ENCODE measurements at regions of chr5 and their contacts with region 1.

Region 1: GRCh38 chr5:57173185-57174127 is at the start of gene GPBP1:
- DNase-seq: peak; percentile 94
- ATAC-seq: peak; percentile 72
- H3K4me3 ChIP-seq: peak within 1 kb of the TSS; percentile 87
- H3K27ac ChIP-seq: peak within 1 kb of the TSS; percentile 99
- H3K4me1 ChIP-seq: no peaks in the 10 kb centered on the region
- H3K27me3 ChIP-seq: no peaks in the 10 kb centered on the region
- CTCF ChIP-seq: no peak
- EP300 ChIP-seq: peak; percentile 68 to 72; a peak in 2 of 4 replicates
- POLR2A ChIP-seq: peak; percentile 77
- RAD21 ChIP-seq: no peak
- polyA plus RNA-seq, gene GPBP1: 27.0 to 32.5 TPM

Region 2: GRCh38 chr5:55307383-55308253 is 1865.8 kb before region 1 on chr5 and contains the starts of genes DHX29 and MTREX:
- CTCF ChIA-PET with region 1: no interaction called
- POLR2A ChIA-PET with region 1: no interaction called
- RAD21 ChIA-PET with region 1: no interaction called
- SMC1A ChIA-PET with region 1: no interaction called
- in situ Hi-C with region 1: loop called (anchors 25 kb)
- intact Hi-C with region 1: no loop called
- DNase-seq: peak; percentile 63
- ATAC-seq: peak; percentile 94
- H3K4me3 ChIP-seq: peak within 1 kb of the TSS; percentile 85
- H3K27ac ChIP-seq: peak within 1 kb of the TSS; percentile 80
- H3K4me1 ChIP-seq: no peaks in the 10 kb centered on the region
- H3K27me3 ChIP-seq: no peaks in the 10 kb centered on the region
- CTCF ChIP-seq: no peak
- EP300 ChIP-seq: no peak
- POLR2A ChIP-seq: peak; percentile 98
- RAD21 ChIP-seq: no peak
- polyA plus RNA-seq, gene DHX29: 5.8 to 9.5 TPM
- polyA plus RNA-seq, gene MTREX: 20.1 to 26.1 TPM

Region 3: DNA sequence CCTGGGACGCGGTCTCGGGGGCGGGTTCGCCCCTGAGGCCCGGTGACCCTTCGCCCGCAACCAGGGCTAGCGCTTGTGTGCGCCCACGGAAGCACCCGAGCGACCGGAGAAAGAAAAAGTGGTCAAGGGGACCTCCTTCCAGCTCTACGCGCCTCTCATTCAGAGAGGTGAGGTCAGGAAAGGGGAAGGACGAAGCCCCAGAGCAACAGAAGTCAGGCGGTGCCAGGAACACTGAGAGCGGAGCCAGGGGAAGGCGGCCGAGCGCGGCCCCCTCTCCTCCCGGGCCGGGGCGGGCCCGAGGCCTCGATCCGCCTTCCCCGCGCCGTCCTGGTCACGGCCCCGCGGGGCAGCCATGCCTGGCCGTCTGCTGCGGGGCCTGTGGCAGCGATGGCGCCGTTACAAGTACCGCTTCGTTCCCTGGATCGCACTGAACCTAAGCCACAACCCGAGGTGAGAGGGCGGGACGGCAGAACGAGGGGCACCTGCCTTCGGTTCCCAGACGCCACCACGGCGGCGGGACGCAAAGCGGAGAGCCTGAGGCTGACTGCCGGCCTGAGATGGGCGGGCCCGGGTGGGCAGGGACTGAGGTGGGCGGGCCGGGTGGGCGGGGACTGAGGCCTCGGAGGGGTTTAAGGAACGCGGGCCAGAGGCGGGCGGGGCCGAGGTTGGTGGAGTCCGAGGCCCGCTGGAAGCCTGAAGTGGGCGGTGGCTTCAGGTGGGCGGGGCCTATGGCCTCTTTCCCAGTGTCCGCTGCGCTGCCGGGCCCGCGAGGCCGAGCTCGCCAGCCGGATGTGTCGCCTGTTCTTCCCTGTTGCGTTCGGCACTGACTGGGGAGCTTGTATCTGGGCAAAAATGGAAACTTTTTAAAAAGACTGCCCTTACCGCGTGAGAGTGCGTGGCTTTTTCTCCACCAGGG is 263.9 kb before region 1 on chr5 and contains the start of gene SETD9:
- CTCF ChIA-PET with region 1: interaction called, 6 read pairs
- POLR2A ChIA-PET with region 1: interaction called, 8 read pairs
- RAD21 ChIA-PET with region 1: interaction called, 13 read pairs
- SMC1A ChIA-PET with region 1: interaction called, 8 read pairs
- in situ Hi-C with region 1: no loop called
- intact Hi-C with region 1: no loop called
- DNase-seq: peak; percentile 86
- ATAC-seq: peak; percentile 90
- H3K4me3 ChIP-seq: peak within 1 kb of the TSS; percentile 79
- H3K27ac ChIP-seq: peak within 1 kb of the TSS; percentile 91
- H3K4me1 ChIP-seq: peaks cover 7% of the 10 kb centered on the region
- H3K27me3 ChIP-seq: no peaks in the 10 kb centered on the region
- CTCF ChIP-seq: no peak
- EP300 ChIP-seq: no peak
- POLR2A ChIP-seq: peak; percentile 98
- RAD21 ChIP-seq: no peak
- polyA plus RNA-seq, gene SETD9: 12.9 to 17.1 TPM

Region 4: DNA sequence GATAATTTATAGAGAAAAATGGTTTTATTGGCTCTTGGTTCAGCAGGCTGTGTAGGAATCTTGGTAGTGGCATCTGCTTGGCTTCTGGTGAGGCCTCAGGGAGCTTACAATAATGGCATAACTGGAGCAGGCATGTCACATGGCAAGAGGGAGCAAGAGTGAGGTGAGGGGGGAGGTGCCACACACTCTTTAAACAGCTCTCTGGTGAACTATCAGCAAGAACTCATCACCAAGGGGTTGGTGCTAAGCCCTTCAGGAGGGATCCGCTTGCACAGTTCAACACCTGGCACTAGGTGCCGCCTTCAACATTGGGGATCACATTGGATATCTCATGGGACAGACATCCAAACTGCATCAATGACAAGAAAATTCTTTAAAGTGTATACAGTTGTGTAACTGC is 10.9 kb after region 1 on chr5:
- CTCF ChIA-PET with region 1: interaction called, 5 read pairs
- POLR2A ChIA-PET with region 1: interaction called, 11 read pairs
- RAD21 ChIA-PET with region 1: interaction called, 4 read pairs
- SMC1A ChIA-PET with region 1: interaction called, 48 read pairs
- in situ Hi-C with region 1: no loop called
- intact Hi-C with region 1: no loop called
- DNase-seq: no peak
- ATAC-seq: peak; percentile 16
- H3K4me3 ChIP-seq: peak overlapping the region; percentile 25; the same call in 1 of the 2 replicates
- H3K27ac ChIP-seq: no peak overlapping the region
- H3K4me1 ChIP-seq: peaks cover 32% of the 10 kb centered on the region
- H3K27me3 ChIP-seq: no peaks in the 10 kb centered on the region
- CTCF ChIP-seq: no peak
- EP300 ChIP-seq: no peak
- POLR2A ChIP-seq: no peak
- RAD21 ChIP-seq: no peak

Region 5: DNA sequence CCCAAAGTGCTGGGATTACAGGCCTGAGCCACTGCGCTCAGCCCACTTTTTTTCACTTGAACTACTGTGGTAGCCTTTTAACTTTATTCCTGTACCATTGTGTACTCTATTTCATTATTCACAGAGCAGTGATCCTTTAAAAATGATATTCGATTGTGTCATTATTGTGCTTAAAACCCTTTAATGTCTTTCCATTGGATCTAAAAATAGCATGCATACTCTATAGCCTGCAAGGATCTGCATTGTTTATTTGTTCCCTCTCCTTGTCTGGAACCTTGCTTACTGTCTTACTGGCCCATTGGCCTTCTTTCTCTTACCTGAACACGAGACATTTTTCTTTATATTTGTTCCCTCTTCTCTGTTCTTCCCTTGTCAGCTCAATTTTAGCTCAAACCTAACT is 16.1 kb after region 1 on chr5:
- CTCF ChIA-PET with region 1: interaction called, 5 read pairs
- POLR2A ChIA-PET with region 1: interaction called, 23 read pairs
- RAD21 ChIA-PET with region 1: interaction called, 7 read pairs
- SMC1A ChIA-PET with region 1: interaction called, 48 read pairs
- in situ Hi-C with region 1: no loop called
- intact Hi-C with region 1: no loop called
- DNase-seq: no peak
- ATAC-seq: no peak
- H3K4me3 ChIP-seq: no peak overlapping the region
- H3K27ac ChIP-seq: no peak overlapping the region
- H3K4me1 ChIP-seq: peaks cover 38% of the 10 kb centered on the region
- H3K27me3 ChIP-seq: no peaks in the 10 kb centered on the region
- CTCF ChIP-seq: no peak
- EP300 ChIP-seq: no peak
- POLR2A ChIP-seq: no peak
- RAD21 ChIP-seq: no peak

Region 6: GRCh38 chr5:57277085-57277484 is 103.6 kb after region 1 on chr5:
- CTCF ChIA-PET with region 1: no interaction called
- POLR2A ChIA-PET with region 1: no interaction called
- RAD21 ChIA-PET with region 1: no interaction called
- SMC1A ChIA-PET with region 1: no interaction called
- in situ Hi-C with region 1: no loop called
- intact Hi-C with region 1: no loop called
- DNase-seq: no peak
- ATAC-seq: no peak
- H3K4me3 ChIP-seq: no peak overlapping the region
- H3K27ac ChIP-seq: no peak overlapping the region
- H3K4me1 ChIP-seq: no peaks in the 10 kb centered on the region
- H3K27me3 ChIP-seq: no peaks in the 10 kb centered on the region
- CTCF ChIP-seq: peak in 2 of 3 experiments; percentile 16 to 31; a peak in 2 of 6 replicates
- EP300 ChIP-seq: no peak
- POLR2A ChIP-seq: no peak
- RAD21 ChIP-seq: peak; percentile 41